Ascending aorta (tissue), 2 donors: ENCODE measurements at regions of chr9 and their contacts with region 1.

Region 1: DNA sequence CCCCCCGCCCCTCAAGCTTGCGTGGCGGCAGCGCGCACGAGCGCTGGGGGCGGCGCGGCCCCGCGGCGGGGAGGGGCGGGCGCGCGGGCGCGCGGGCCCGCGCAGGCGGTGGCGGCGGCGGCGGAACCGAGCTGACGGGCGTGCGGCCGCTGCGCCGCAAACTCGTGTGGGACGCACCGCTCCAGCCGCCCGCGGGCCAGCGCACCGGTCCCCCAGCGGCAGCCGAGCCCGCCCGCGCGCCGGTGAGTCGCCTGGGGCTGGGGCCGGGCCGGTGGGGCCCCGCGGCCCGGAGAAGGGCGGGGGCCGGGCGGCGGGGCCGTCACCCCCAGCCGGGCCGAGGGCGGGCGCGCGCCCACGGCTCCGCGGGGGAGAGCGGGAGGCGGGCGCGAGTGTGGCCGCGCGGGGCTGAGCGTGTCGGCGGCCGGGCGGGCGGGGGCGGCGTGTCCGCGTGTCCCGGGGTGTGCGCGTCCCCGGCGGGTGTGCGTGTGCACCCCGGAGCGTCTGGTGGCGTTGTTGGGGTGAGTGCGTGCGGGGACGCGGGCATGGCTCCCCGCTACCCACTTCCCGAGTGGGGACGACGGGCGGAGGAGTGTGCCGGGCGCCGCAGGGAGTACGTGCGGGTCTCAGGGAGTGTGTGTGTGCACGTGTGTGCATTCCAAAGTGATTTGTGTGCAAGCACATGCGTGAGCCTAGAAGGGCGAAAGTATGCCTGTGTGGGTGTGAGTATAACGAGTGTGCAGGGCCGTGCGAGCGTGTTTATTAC is at the start of gene NEK6:
- DNase-seq: peak in 1 of 2 donors; percentile 70
- H3K4me3 ChIP-seq: peak within 1 kb of the TSS; percentile 77 to 87
- H3K27ac ChIP-seq: peak within 1 kb of the TSS; percentile 90 to 96
- H3K4me1 ChIP-seq: peaks cover 24 to 39% of the 10 kb centered on the region in 2 donors
- H3K27me3 ChIP-seq: no peaks in the 10 kb centered on the region
- CTCF ChIP-seq: no peak
- total RNA-seq, gene NEK6: 6.7 TPM

Region 2: GRCh38 chr9:124030969-124031451 is 227.0 kb before region 1 on chr9:
- intact Hi-C with region 1: no loop called
- DNase-seq: no peak
- H3K4me3 ChIP-seq: no peak overlapping the region
- H3K27ac ChIP-seq: no peak overlapping the region
- H3K4me1 ChIP-seq: no peaks in the 10 kb centered on the region
- H3K27me3 ChIP-seq: no peaks in the 10 kb centered on the region
- CTCF ChIP-seq: no peak

Region 3: DNA sequence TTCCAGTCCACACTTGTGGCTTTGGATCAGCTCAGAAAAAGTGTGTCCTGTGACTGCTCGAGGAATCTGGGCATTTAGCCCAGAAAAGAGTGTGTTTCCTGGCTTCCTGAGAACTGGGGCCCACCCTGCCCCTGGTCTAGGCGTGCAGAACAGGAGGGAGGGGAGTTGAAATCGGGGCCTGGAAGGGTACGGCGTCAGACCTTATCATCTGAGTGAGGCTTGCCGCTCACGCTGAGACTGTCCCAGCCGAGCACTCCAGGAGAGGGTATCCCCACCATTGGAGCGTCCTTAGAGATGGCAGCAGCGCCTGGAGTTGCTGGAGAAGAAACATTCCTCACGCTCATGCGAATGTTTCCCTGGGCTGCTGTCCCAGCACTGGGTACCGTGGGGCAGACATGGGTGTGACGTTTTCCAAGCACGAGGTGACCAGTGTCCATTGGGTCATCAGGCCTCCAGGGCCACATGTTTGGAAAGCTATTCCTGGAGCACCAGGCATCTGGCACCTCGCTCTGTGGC is 22.2 kb after region 1 on chr9:
- intact Hi-C with region 1: loop called (anchors 1 kb)
- DNase-seq: peak; percentile 65 to 90
- H3K4me3 ChIP-seq: peak overlapping the region in 1 of 2 donors; percentile 30
- H3K27ac ChIP-seq: peak overlapping the region; percentile 88 to 93
- H3K4me1 ChIP-seq: peaks cover 23 to 58% of the 10 kb centered on the region in 2 donors
- H3K27me3 ChIP-seq: no peaks in the 10 kb centered on the region
- CTCF ChIP-seq: no peak

Region 4: GRCh38 chr9:124285903-124286291 is 27.9 kb after region 1 on chr9:
- intact Hi-C with region 1: loop called (anchors 2 kb)
- DNase-seq: peak; percentile 55 to 88
- H3K4me3 ChIP-seq: no peak overlapping the region
- H3K27ac ChIP-seq: peak overlapping the region; percentile 88 to 93
- H3K4me1 ChIP-seq: peaks cover 16 to 52% of the 10 kb centered on the region in 2 donors
- H3K27me3 ChIP-seq: no peaks in the 10 kb centered on the region
- CTCF ChIP-seq: no peak

Region 5: DNA sequence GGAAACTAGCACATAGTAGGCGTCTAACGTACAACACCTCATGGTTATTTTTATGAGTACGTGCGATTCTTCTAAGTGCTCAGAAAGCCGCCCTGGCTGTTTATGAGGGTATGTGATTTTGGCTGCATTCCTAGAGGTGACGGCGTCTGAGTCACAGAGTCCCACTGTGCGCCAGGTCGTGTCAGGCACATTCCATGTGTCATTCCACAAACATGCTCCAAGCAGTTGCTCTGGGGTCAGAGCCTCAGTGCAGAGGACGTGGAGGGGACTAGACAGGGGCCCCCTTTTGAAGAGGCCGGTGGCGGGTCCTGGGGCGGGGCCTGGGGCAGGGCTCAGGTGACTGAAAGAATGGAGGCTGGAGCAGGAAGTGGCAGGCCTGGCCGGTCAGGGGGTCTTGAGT is 51.6 kb after region 1 on chr9:
- intact Hi-C with region 1: loop called (anchors 1 kb)
- DNase-seq: peak; percentile 60 to 95
- H3K4me3 ChIP-seq: no peak overlapping the region
- H3K27ac ChIP-seq: peak overlapping the region; percentile 39 to 61
- H3K4me1 ChIP-seq: peaks cover 4 to 9% of the 10 kb centered on the region in 2 donors
- H3K27me3 ChIP-seq: no peaks in the 10 kb centered on the region
- CTCF ChIP-seq: no peak

Region 6: GRCh38 chr9:124320062-124320973 is 62.3 kb after region 1 on chr9:
- intact Hi-C with region 1: loop called (anchors 2 kb)
- DNase-seq: peak in 1 of 2 donors; percentile 77
- H3K4me3 ChIP-seq: no peak overlapping the region
- H3K27ac ChIP-seq: no peak overlapping the region
- H3K4me1 ChIP-seq: peaks cover 0 to 4% of the 10 kb centered on the region in 2 donors
- H3K27me3 ChIP-seq: no peaks in the 10 kb centered on the region
- CTCF ChIP-seq: peak; percentile 80 to 86 (median 81)